Dorsolateral prefrontal cortex (tissue), 120 donors: ENCODE measurements at regions of chrX and their contacts with region 1.

Region 1: GRCh38 chrX:19887911-19888879 is 795 bp upstream of the SH3KBP1 start:
- DNase-seq: peak in 4 of 10 donors; percentile 35 to 46 (median 44)
- H3K4me3 ChIP-seq: peak overlapping the region; percentile 34 to 81 (median 59)
- H3K27ac ChIP-seq: peak overlapping the region in 50 of 59 donors; percentile 3 to 90 (median 70)
- H3K27me3 ChIP-seq: peaks cover 0 to 40% (median 4%) of the 10 kb centered on the region in 45 donors
- CTCF ChIP-seq: peak in 55 of 56 donors; percentile 0 to 77 (median 58)

Region 2: GRCh38 chrX:19382555-19383145 is 505.5 kb before region 1 on chrX:
- intact Hi-C with region 1: loop called (anchors 5 kb)
- DNase-seq: peak in 5 of 10 donors; percentile 13 to 55 (median 33)
- H3K4me3 ChIP-seq: no peak overlapping the region
- H3K27ac ChIP-seq: no peak overlapping the region
- H3K27me3 ChIP-seq: peaks cover 0 to 68% (median 25%) of the 10 kb centered on the region in 45 donors
- CTCF ChIP-seq: peak in 49 of 56 donors; percentile 14 to 67 (median 41)

Region 3: GRCh38 chrX:19593690-19594089 is 294.5 kb before region 1 on chrX:
- intact Hi-C with region 1: loop called (anchors 5 kb)
- DNase-seq: no peak
- H3K4me3 ChIP-seq: no peak overlapping the region
- H3K27ac ChIP-seq: peak overlapping the region in 16 of 59 donors; percentile 3 to 75 (median 51)
- H3K27me3 ChIP-seq: peaks cover 0 to 50% (median 3%) of the 10 kb centered on the region in 45 donors
- CTCF ChIP-seq: peak; percentile 26 to 76 (median 59)

Region 4: DNA sequence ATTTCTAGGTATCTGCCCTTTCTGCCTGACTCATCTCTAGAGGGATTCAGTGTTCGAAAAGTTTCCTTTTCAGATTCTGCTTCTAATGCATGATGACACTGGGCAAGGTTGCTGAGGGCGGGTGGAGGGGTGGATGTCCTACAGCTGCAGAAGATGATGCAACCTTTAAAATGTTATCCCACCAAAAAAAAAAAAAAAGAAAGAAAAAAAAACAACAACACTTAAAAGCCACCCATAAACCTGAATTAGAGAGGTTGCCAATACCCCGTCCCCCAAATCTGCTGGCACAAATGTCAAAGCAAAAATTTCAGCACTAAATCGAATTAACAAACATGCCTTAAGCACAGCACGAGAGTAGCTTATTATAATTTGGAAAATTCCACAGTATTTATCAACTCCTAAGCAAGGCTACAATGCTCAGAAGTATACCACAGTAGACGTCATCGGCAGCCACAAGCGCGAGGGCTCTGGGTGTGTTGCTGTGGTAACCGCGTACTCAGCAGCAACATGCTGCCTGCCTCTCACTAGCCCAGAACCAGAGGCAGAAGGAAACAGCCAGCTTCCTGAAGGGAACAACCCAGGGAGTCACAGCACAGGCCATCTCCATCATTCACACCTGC is 205.4 kb before region 1 on chrX:
- intact Hi-C with region 1: loop called (anchors 10 kb)
- DNase-seq: peak; percentile 6 to 72 (median 62)
- H3K4me3 ChIP-seq: peak overlapping the region in 8 of 59 donors; percentile 3 to 34 (median 22)
- H3K27ac ChIP-seq: peak overlapping the region in 17 of 59 donors; percentile 0 to 59 (median 39)
- H3K27me3 ChIP-seq: peaks cover 0 to 65% (median 8%) of the 10 kb centered on the region in 45 donors
- CTCF ChIP-seq: no peak

Region 5: DNA sequence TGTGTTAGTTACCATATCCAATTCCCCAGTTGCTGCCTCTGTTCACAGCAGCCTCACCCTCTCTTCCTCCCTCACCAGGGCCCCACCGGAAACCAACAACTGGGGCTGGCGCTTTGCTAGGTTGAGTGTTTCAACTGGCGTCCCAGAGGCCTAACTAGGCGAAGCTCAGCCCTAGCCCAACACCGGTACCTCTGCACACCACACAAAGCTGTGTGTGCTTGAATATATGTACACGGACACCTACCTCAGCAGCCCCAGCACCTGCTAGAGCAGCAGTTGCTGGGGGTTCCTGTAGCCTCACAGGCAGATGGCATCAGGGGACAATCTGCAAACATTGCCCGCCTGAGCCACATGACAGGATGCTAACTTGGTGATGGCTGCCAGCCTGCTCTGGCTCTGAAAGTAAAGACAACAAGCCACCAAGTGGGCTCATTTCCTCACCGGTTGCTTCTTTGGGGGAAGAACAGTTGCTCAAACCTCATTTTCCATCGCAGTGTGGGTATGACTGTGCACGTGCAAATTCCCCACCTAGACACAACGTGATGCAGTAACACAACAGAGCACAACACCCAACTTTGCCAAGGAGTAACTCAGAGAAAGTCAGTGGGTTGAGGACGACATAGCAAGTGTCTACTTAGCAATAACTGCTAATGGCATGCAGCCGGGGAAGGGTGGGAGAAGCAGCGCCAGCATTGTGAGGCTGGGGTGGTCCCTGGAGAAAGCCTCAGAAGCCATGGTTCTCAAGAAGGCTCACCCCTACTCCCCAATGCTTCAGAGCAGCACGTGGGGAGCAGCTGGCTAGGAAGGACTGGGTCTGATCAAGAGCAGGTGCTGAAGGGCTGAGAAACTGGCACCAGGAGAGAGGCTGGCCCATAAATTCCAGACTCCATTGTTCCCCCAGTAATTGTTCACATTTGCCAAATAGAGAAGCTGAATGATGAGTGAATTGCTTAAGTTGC is 140.3 kb before region 1 on chrX:
- intact Hi-C with region 1: loop called in 1 of 2 experiments (anchors 5 kb)
- DNase-seq: peak in 1 of 10 donors; percentile 12
- H3K4me3 ChIP-seq: no peak overlapping the region
- H3K27ac ChIP-seq: no peak overlapping the region
- H3K27me3 ChIP-seq: peaks cover 0 to 39% (median 5%) of the 10 kb centered on the region in 45 donors
- CTCF ChIP-seq: no peak

Region 6: DNA sequence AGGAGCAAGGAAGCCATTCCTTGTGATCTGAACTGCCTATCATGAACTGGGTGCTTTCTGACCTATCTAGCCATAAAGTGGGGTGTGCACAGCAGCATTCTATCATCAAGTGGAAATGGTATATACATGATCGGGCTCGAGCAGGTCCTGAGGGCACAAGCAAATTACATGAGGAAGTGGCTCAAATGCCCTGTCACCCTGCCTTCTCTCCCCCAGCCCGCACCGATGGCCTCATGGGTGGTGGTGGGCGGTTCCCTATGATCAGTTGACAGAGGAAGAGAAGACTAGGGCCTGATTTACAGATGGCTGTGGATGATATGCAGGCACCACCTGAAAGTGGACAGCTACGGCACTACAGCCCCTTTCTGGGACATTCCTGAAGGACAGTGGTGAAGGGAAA is 149.0 kb after region 1 on chrX:
- intact Hi-C with region 1: no loop called
- DNase-seq: no peak
- H3K4me3 ChIP-seq: no peak overlapping the region
- H3K27ac ChIP-seq: no peak overlapping the region
- H3K27me3 ChIP-seq: peaks cover 0 to 60% (median 12%) of the 10 kb centered on the region in 45 donors
- CTCF ChIP-seq: no peak

Region 7: GRCh38 chrX:20116579-20117240 is 228.5 kb after region 1 on chrX and contains the start of gene MAP7D2:
- intact Hi-C with region 1: no loop called
- DNase-seq: peak in 4 of 10 donors; percentile 14 to 62 (median 34)
- H3K4me3 ChIP-seq: peak within 1 kb of the TSS; percentile 6 to 70 (median 49)
- H3K27ac ChIP-seq: no peak within 1 kb of the TSS
- H3K27me3 ChIP-seq: peaks cover 0 to 70% (median 13%) of the 10 kb centered on the region in 45 donors
- CTCF ChIP-seq: no peak
- total RNA-seq, gene MAP7D2: 15.7 to 85.7 (median 57.2) TPM